Activated B cell treated with CpG ODN at 0.5 μM for 24 hours (primary cell): ENCODE measurements at regions of chr10 and their contacts with region 1.

Region 1: DNA sequence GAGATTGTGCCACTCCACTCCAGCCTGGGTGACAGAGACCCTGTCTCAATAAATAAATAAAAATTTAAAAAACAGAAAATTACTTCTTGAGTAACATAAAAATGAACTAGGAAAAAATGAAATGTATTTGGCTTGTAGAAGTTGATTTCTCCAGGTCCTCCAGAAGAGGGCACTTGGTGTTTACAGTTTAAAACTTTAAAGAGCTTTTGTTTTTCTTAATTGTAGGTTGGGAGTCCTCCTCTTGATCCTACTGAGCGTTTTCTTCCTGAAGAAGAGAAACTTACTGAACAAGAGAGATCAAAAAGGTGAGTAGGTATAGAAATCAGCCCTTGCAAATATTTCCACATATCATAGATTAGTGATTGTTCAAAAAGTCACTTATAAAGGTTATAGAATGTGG is 16.2 kb downstream of the KIFBP start:
- DNase-seq: no peak
- ATAC-seq: peak; percentile 71
- H3K4me3 Mint-ChIP-seq: no peak overlapping the region
- H3K27ac Mint-ChIP-seq: no peak overlapping the region
- H3K4me1 Mint-ChIP-seq: no peaks in the 10 kb centered on the region
- H3K27me3 Mint-ChIP-seq: no peaks in the 10 kb centered on the region
- CTCF ChIP-seq: no peak

Region 2: GRCh38 chr10:68752711-68753350 is 252.0 kb before region 1 on chr10:
- CTCF ChIA-PET with region 1: no interaction called
- POLR2A ChIA-PET with region 1: no interaction called
- intact Hi-C with region 1: no loop called
- DNase-seq: no peak
- ATAC-seq: no peak
- H3K4me3 Mint-ChIP-seq: no peak overlapping the region
- H3K27ac Mint-ChIP-seq: no peak overlapping the region
- H3K4me1 Mint-ChIP-seq: no peaks in the 10 kb centered on the region
- H3K27me3 Mint-ChIP-seq: no peaks in the 10 kb centered on the region
- CTCF ChIP-seq: no peak

Region 3: DNA sequence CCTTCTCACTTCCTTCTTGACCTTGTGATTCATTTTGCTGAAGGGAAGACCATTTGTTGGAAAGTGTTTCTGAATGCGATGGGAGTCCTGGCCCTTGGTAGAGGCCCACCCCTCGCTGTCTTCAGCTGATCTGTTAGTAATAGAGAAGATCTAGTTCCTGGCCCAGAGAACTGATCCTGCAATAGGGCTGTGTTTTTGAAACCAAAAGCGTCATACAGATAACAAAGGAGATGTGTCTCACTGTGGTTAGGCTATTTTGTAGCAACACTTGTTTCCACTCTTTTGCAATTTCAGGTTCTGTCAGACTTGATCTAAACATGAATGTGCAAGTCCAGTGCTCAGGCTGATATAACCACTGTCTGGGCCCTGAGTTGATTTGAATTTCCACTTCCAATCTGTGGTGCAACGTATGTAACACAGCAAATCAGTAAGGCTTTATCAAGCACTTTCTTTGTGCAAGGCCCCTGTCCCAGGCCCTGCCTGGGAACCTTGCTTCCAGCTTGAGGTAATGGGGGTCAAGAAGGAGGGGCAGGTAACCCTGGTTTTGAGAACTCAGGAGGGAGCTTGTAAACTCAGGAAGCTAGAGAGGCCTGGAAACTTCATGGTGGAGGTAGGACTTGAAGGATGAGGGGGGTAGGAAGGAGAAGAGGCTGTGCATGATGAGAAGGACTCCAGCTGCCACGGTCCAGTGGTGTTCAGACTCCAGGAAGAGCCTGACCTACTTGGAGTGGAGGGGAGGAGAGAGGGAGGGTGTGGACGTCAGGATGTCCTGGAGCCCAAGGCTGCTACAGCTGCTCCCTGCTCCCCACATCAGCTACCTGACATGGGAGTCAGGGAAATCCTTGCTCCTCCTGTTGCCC is 40.9 kb after region 1 on chr10:
- CTCF ChIA-PET with region 1: interaction called, 7 read pairs
- POLR2A ChIA-PET with region 1: no interaction called
- intact Hi-C with region 1: loop called (anchors 5 kb)
- DNase-seq: no peak
- ATAC-seq: no peak
- H3K4me3 Mint-ChIP-seq: no peak overlapping the region
- H3K27ac Mint-ChIP-seq: peak overlapping the region; percentile 85
- H3K4me1 Mint-ChIP-seq: peaks cover 27% of the 10 kb centered on the region
- H3K27me3 Mint-ChIP-seq: no peaks in the 10 kb centered on the region
- CTCF ChIP-seq: no peak

Region 4: DNA sequence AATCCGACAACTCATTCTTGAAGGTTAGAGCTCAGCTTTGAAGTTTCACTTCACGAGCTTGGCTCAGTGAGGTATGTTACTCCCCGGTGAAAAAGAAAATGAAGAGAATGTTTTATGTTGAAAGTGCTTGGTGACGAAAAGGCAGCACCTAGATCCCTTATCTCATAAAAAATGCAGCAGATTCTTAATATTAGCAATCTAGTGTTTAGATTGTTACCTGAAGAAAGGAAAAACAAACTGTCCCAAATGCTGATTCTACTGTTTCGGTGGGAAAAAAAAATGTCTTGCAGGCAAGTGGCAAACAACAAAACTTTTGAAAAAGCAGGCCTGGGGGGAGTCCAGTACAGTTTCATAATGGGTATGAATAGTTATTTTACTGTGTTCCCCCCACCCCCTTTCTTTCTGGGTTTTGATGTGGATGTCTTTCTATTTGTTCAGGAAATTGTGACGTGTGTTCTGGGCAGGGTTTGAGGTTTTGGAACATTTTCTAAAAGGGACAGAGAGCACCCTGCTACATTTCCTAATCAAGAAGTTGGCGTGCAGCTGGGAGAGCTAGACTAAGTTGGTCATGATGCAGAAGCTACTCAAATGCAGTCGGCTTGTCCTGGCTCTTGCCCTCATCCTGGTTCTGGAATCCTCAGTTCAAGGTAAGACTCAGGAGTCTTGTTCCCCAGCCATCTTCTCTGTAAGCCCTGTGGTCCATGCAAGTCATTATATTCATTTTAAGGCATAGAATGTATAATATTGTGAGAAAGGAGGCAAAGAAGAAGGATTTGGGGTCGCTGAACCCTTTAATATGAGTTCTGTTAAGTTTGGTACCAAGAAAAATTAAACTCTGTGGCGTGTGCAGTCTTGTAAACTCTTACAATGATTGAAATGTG is 83.0 kb after region 1 on chr10 and contains the start of gene SRGN:
- CTCF ChIA-PET with region 1: interaction called, 169 read pairs
- POLR2A ChIA-PET with region 1: interaction called, 20 read pairs
- intact Hi-C with region 1: loop called (anchors 1 kb)
- DNase-seq: peak; percentile 26
- ATAC-seq: peak; percentile 71
- H3K4me3 Mint-ChIP-seq: peak within 1 kb of the TSS; percentile 84
- H3K27ac Mint-ChIP-seq: peak within 1 kb of the TSS; percentile 95
- H3K4me1 Mint-ChIP-seq: peaks cover 56% of the 10 kb centered on the region
- H3K27me3 Mint-ChIP-seq: no peaks in the 10 kb centered on the region
- CTCF ChIP-seq: no peak
- total RNA-seq, gene SRGN: 91.4 and 95.5 TPM in 2 replicates

Region 5: GRCh38 chr10:69092959-69093850 is 88.4 kb after region 1 on chr10:
- CTCF ChIA-PET with region 1: interaction called, 169 read pairs
- POLR2A ChIA-PET with region 1: interaction called, 20 read pairs
- intact Hi-C with region 1: loop called (anchors 1 kb)
- DNase-seq: peak; percentile 27
- ATAC-seq: peak; percentile 59
- H3K4me3 Mint-ChIP-seq: no peak overlapping the region
- H3K27ac Mint-ChIP-seq: peak overlapping the region; percentile 8
- H3K4me1 Mint-ChIP-seq: peaks cover 45% of the 10 kb centered on the region
- H3K27me3 Mint-ChIP-seq: no peaks in the 10 kb centered on the region
- CTCF ChIP-seq: peak; percentile 34

Region 6: GRCh38 chr10:69222157-69223027 is 217.6 kb after region 1 on chr10:
- CTCF ChIA-PET with region 1: no interaction called
- POLR2A ChIA-PET with region 1: no interaction called
- intact Hi-C with region 1: loop called (anchors 1 kb)
- DNase-seq: peak; percentile 29
- ATAC-seq: peak; percentile 85
- H3K4me3 Mint-ChIP-seq: peak overlapping the region; percentile 53
- H3K27ac Mint-ChIP-seq: peak overlapping the region; percentile 68
- H3K4me1 Mint-ChIP-seq: peaks cover 29% of the 10 kb centered on the region
- H3K27me3 Mint-ChIP-seq: no peaks in the 10 kb centered on the region
- CTCF ChIP-seq: no peak

Region 7: DNA sequence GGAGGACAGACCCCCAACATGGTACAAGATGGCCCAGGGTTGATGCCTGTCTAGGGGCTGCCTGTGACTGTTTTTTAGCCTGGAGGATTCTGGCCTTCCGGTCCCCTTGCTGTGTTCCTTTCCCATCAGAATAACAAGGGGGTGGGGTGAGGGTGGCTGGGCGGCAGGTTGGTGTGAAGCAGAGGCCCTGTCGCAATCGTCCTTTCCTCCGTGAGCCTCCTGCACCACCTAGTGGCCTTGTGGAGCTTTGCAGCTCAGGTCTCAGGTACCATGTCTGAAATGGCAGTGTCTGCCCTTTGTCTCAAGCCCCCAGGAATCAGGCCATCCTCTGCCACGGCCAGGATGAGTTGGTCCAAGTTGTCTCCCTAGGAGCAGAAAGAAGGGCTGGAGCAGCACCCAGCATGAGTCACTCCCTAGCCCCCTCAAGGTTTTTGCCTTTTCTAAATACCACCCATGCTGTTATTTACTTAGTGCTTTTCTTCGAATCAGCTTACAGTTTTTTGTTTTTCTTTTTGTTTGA is 387.7 kb after region 1 on chr10:
- CTCF ChIA-PET with region 1: interaction called, 8 read pairs
- POLR2A ChIA-PET with region 1: no interaction called
- intact Hi-C with region 1: loop called (anchors 5 kb)
- DNase-seq: peak; percentile 62
- ATAC-seq: peak; percentile 99
- H3K4me3 Mint-ChIP-seq: no peak overlapping the region
- H3K27ac Mint-ChIP-seq: no peak overlapping the region
- H3K4me1 Mint-ChIP-seq: peaks cover 16% of the 10 kb centered on the region
- H3K27me3 Mint-ChIP-seq: no peaks in the 10 kb centered on the region
- CTCF ChIP-seq: peak; percentile 94

Region 8: DNA sequence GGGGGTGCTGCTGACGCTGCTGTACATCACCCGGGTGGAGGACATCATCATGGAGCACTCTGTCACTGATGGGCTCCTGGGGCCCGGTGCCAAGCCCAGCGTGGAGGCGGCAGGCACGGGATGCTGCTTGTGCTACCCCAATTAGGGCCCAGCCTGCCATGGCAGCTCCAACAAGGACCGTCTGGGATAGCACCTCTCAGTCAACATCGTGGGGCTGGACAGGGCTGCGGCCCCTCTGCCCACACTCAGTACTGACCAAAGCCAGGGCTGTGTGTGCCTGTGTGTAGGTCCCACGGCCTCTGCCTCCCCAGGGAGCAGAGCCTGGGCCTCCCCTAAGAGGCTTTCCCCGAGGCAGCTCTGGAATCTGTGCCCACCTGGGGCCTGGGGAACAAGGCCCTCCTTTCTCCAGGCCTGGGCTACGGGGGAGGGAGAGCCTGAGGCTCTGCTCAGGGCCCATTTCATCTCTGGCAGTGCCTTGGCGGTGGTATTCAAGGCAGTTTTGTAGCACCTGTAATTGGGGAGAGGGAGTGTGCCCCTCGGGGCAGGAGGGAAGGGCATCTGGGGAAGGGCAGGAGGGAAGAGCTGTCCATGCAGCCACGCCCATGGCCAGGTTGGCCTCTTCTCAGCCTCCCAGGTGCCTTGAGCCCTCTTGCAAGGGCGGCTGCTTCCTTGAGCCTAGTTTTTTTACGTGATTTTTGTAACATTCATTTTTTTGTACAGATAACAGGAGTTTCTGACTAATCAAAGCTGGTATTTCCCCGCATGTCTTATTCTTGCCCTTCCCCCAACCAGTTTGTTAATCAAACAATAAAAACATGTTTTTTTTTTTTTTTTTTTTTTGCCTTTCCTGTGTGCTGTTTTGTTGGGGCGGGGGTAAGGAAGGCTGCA is 502.3 kb after region 1 on chr10:
- CTCF ChIA-PET with region 1: interaction called, 3 read pairs
- POLR2A ChIA-PET with region 1: no interaction called
- intact Hi-C with region 1: loop called (anchors 5 kb)
- DNase-seq: no peak
- ATAC-seq: no peak
- H3K4me3 Mint-ChIP-seq: peak overlapping the region; percentile 59
- H3K27ac Mint-ChIP-seq: no peak overlapping the region
- H3K4me1 Mint-ChIP-seq: peaks cover 5% of the 10 kb centered on the region
- H3K27me3 Mint-ChIP-seq: peaks cover 18% of the 10 kb centered on the region
- CTCF ChIP-seq: no peak